Caco-2 (cell line): ENCODE measurements at regions of chr5 and their contacts with region 1.

Region 1: GRCh38 chr5:170623576-170624181 is 119.9 kb downstream of the KCNIP1 start:
- DNase-seq: peak in 1 of 2 experiments; percentile 63
- H3K4me3 ChIP-seq: no peak overlapping the region
- H3K4me3 Mint-ChIP-seq: no peak overlapping the region
- H3K27ac Mint-ChIP-seq: no peak overlapping the region
- H3K4me1 ChIP-seq: no peaks in the 10 kb centered on the region
- H3K4me1 Mint-ChIP-seq: no peaks in the 10 kb centered on the region
- H3K27me3 ChIP-seq: no peaks in the 10 kb centered on the region; the same call in none of the 2 replicates
- H3K27me3 Mint-ChIP-seq: peaks cover 10% of the 10 kb centered on the region
- CTCF ChIP-seq: peak; percentile 69 to 87

Region 2: GRCh38 chr5:170434966-170435605 is 188.6 kb before region 1 on chr5:
- CTCF ChIA-PET with region 1: interaction called, 9 read pairs
- POLR2A ChIA-PET with region 1: no interaction called
- intact Hi-C with region 1: loop called (anchors 1 kb)
- DNase-seq: peak in 1 of 2 experiments; percentile 73
- H3K4me3 ChIP-seq: no peak overlapping the region
- H3K4me3 Mint-ChIP-seq: no peak overlapping the region
- H3K27ac Mint-ChIP-seq: no peak overlapping the region
- H3K4me1 ChIP-seq: no peaks in the 10 kb centered on the region
- H3K4me1 Mint-ChIP-seq: no peaks in the 10 kb centered on the region
- H3K27me3 ChIP-seq: peaks cover 2% of the 10 kb centered on the region
- H3K27me3 Mint-ChIP-seq: peaks cover 13% of the 10 kb centered on the region
- CTCF ChIP-seq: peak; percentile 97